Motor neuron (in vitro differentiated cells): ENCODE measurements at regions of chr17 and their contacts with region 1.

Region 1: GRCh38 chr17:35808962-35809854 is at the start of gene TAF15:
- ATAC-seq: peak; percentile 88 to 98 (median 96)
- H3K4me3 ChIP-seq: peak within 1 kb of the TSS; percentile 77 to 95 (median 92)
- H3K27ac ChIP-seq: peak within 1 kb of the TSS; percentile 95 to 99
- H3K4me1 ChIP-seq: peaks cover 11 to 12% of the 10 kb centered on the region in 2 donors
- total RNA-seq, gene TAF15: 40.6 to 190 (median 53.7) TPM

Region 2: GRCh38 chr17:35900708-35901480 is 91.7 kb after region 1 on chr17:
- in situ Hi-C with region 1: loop called in 1 of 9 experiments (anchors 25 kb)
- ATAC-seq: peak in 6 of 8 experiments; percentile 51 to 93 (median 82)
- H3K4me3 ChIP-seq: no peak overlapping the region
- H3K27ac ChIP-seq: no peak overlapping the region
- H3K4me1 ChIP-seq: no peaks in the 10 kb centered on the region